Activated CD8-positive, alpha-beta T cell treated with anti-CD3 and anti-CD28 coated beads, Interleukin-2, amount 10 ng/mL, durations not matched to agents 7 days and 5 days (primary cell): ENCODE measurements at regions of chr1 and their contacts with region 1.

Region 1: DNA sequence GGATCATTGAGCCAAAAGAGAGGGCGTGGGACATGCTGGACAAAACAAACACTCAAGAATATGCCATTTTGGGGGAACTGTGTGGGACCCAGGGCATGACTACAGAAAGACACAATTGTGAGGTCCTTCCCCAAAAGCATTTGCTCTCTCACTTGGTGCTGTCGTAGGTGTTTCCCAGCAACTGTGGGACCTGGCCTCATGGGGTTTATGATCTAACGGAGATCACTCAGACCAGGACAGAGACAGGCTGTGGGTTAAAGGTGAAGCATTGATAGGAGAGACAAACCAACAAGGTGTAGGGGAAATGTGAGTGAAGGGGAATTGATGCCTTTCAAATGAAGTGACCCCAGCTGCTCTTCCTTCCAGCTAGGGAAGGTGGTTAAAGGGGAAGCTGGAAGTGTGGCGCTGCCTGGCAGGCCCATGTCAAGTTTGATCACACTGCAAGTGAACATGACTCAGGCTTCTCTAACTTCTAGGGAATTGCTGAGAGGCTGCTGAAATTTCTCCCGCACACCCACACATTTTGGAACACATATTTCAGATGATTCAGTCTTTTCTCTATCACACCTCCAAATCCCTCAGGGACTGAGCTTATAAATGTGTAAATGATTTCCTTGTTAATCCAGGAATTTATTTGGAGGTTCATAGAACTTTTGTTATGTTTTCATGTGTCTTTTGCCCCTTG is 30.2 kb downstream of the TRAF5 start:
- DNase-seq: no peak
- ATAC-seq: no peak
- H3K4me3 Mint-ChIP-seq: no peak overlapping the region
- H3K27ac Mint-ChIP-seq: no peak overlapping the region
- H3K4me1 Mint-ChIP-seq: peaks cover 42% of the 10 kb centered on the region
- H3K27me3 Mint-ChIP-seq: no peaks in the 10 kb centered on the region

Region 2: GRCh38 chr1:211329764-211330201 is 27.1 kb before region 1 on chr1:
- CTCF ChIA-PET with region 1: interaction called, 7 read pairs
- POLR2A ChIA-PET with region 1: interaction called, 11 read pairs
- DNase-seq: peak; percentile 38
- ATAC-seq: peak; percentile 22
- H3K4me3 Mint-ChIP-seq: peak overlapping the region; percentile 89
- H3K27ac Mint-ChIP-seq: peak overlapping the region; percentile 92
- H3K4me1 Mint-ChIP-seq: peaks cover 81% of the 10 kb centered on the region
- H3K27me3 Mint-ChIP-seq: no peaks in the 10 kb centered on the region